Panc1 (cell line): ENCODE measurements at regions of chr17 and their contacts with region 1.

Region 1: GRCh38 chr17:76091526-76092285 is 11.9 kb downstream of the EXOC7 start:
- DNase-seq: no peak
- ATAC-seq: no peak
- H3K4me3 ChIP-seq: no peak overlapping the region
- H3K27ac ChIP-seq: no peak overlapping the region
- H3K4me1 ChIP-seq: no peaks in the 10 kb centered on the region
- H3K27me3 ChIP-seq: no peaks in the 10 kb centered on the region
- CTCF ChIP-seq: no peak

Region 2: GRCh38 chr17:74994476-74994875 is 1097.2 kb before region 1 on chr17:
- CTCF ChIA-PET with region 1: no interaction called
- POLR2A ChIA-PET with region 1: no interaction called
- in situ Hi-C with region 1: no loop called
- intact Hi-C with region 1: no loop called
- DNase-seq: no peak
- ATAC-seq: no peak
- H3K4me3 ChIP-seq: no peak overlapping the region
- H3K27ac ChIP-seq: no peak overlapping the region
- H3K4me1 ChIP-seq: peaks cover 7% of the 10 kb centered on the region
- H3K27me3 ChIP-seq: no peaks in the 10 kb centered on the region
- CTCF ChIP-seq: no peak

Region 3: GRCh38 chr17:76452660-76453430 is 361.1 kb after region 1 on chr17 and contains the start of gene UBE2O:
- CTCF ChIA-PET with region 1: no interaction called
- POLR2A ChIA-PET with region 1: interaction called, 15 read pairs
- in situ Hi-C with region 1: no loop called
- intact Hi-C with region 1: no loop called
- DNase-seq: no peak
- ATAC-seq: peak; percentile 97
- H3K4me3 ChIP-seq: peak within 1 kb of the TSS; percentile 80 to 88
- H3K27ac ChIP-seq: peak within 1 kb of the TSS; percentile 72
- H3K4me1 ChIP-seq: peaks cover 24% of the 10 kb centered on the region
- H3K27me3 ChIP-seq: no peaks in the 10 kb centered on the region
- CTCF ChIP-seq: peak; percentile 87
- total RNA-seq, gene UBE2O: 47.5 TPM